Activated naive CD4-positive, alpha-beta T cell treated with anti-CD3 and anti-CD28 coated beads, Interleukin-2, amount 10 ng/mL, durations not matched to agents 7 days and 5 days (primary cell): ENCODE measurements at regions of chr14 and their contacts with region 1.

Region 1: DNA sequence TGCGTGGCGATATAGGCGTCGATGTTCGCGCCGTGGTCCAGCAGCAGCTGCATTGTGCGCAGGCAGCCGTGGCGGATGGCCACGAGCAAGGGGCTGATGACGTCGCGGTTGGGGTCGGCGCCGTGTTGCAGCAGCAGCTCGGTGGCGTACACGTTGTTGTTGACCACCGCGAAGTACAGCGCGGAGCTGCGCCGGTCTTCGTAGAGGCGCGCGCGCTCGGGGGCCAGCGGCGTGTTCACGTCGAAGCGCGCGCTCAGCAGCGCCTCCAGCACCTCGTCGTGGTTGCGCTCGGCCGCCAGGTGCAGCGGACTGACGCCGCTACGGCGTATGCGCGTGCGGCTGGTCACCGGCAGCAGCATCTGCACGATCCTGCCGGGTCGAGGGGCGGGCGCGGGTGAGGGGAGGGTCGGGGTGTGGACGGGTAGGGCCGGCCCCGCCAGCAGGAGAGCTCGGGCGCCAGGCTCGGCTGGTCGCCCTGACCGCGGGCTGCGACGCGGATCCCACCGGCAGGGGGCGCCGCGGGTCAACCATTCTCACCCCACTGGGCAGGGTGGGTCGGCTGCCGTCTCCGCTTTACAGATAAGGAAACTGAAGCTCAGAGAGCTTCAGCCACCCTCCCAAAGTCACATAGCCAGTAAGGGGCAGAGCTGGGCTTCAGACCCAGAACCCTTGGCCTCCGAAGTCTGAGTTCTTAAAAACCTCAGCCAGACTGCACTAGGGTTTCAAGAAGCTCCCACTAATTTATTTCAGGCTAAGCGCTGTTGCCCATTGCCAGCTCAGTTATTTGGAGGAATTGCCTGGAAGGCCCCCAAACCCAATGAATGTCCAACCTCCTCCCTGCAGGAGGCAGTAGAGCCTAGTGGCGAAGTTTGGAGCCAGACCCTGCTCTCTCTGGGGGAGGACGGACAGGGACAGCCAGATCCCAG is 12.4 kb downstream of the FAM181A start:
- DNase-seq: peak; percentile 92
- H3K4me3 Mint-ChIP-seq: peak overlapping the region; percentile 62
- H3K27ac Mint-ChIP-seq: peak overlapping the region; percentile 77
- H3K4me1 Mint-ChIP-seq: peaks cover 21% of the 10 kb centered on the region
- H3K27me3 Mint-ChIP-seq: peaks cover 4% of the 10 kb centered on the region

Region 2: GRCh38 chr14:93926873-93927799 is 12.4 kb before region 1 on chr14 and contains the start of gene FAM181A:
- CTCF ChIA-PET with region 1: interaction called, 10 read pairs
- DNase-seq: no peak
- H3K4me3 Mint-ChIP-seq: no peak within 1 kb of the TSS
- H3K27ac Mint-ChIP-seq: no peak within 1 kb of the TSS
- H3K4me1 Mint-ChIP-seq: no peaks in the 10 kb centered on the region
- H3K27me3 Mint-ChIP-seq: peaks cover 8% of the 10 kb centered on the region

Region 3: DNA sequence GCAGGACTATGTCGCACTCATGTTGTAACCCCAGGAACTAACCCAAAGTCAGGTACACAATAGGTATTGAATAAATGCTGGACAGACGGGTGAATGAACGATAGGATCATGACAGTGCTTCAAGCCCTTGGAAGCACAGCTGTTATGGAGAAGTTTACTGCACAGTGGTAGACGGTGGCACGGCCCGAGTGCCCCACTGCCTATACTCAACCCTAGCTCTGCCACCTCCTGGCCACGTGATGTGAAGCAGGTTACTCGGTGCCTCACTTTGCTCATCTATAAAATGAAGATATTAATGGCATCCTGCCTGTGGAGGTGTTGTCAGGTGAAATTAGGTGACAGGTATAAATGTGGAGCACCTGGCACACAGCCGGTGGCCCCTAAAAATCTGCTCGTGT is 31.0 kb after region 1 on chr14:
- CTCF ChIA-PET with region 1: interaction called, 181 read pairs
- DNase-seq: peak; percentile 78
- H3K4me3 Mint-ChIP-seq: peak overlapping the region; percentile 78
- H3K27ac Mint-ChIP-seq: peak overlapping the region; percentile 97
- H3K4me1 Mint-ChIP-seq: peaks cover 98% of the 10 kb centered on the region
- H3K27me3 Mint-ChIP-seq: no peaks in the 10 kb centered on the region

Region 4: GRCh38 chr14:93984987-93985410 is 45.4 kb after region 1 on chr14:
- CTCF ChIA-PET with region 1: interaction called, 15 read pairs
- DNase-seq: no peak
- H3K4me3 Mint-ChIP-seq: no peak overlapping the region
- H3K27ac Mint-ChIP-seq: no peak overlapping the region
- H3K4me1 Mint-ChIP-seq: peaks cover 15% of the 10 kb centered on the region
- H3K27me3 Mint-ChIP-seq: no peaks in the 10 kb centered on the region

Region 5: GRCh38 chr14:94001501-94002396 is 62.2 kb after region 1 on chr14:
- CTCF ChIA-PET with region 1: interaction called, 186 read pairs
- DNase-seq: peak; percentile 67
- H3K4me3 Mint-ChIP-seq: no peak overlapping the region
- H3K27ac Mint-ChIP-seq: peak overlapping the region; percentile 66
- H3K4me1 Mint-ChIP-seq: peaks cover 48% of the 10 kb centered on the region
- H3K27me3 Mint-ChIP-seq: peaks cover 13% of the 10 kb centered on the region

Region 6: GRCh38 chr14:94036313-94037050 is 96.9 kb after region 1 on chr14:
- CTCF ChIA-PET with region 1: interaction called, 20 read pairs
- DNase-seq: peak; percentile 88
- H3K4me3 Mint-ChIP-seq: no peak overlapping the region
- H3K27ac Mint-ChIP-seq: no peak overlapping the region
- H3K4me1 Mint-ChIP-seq: peaks cover 5% of the 10 kb centered on the region
- H3K27me3 Mint-ChIP-seq: peaks cover 10% of the 10 kb centered on the region

Region 7: DNA sequence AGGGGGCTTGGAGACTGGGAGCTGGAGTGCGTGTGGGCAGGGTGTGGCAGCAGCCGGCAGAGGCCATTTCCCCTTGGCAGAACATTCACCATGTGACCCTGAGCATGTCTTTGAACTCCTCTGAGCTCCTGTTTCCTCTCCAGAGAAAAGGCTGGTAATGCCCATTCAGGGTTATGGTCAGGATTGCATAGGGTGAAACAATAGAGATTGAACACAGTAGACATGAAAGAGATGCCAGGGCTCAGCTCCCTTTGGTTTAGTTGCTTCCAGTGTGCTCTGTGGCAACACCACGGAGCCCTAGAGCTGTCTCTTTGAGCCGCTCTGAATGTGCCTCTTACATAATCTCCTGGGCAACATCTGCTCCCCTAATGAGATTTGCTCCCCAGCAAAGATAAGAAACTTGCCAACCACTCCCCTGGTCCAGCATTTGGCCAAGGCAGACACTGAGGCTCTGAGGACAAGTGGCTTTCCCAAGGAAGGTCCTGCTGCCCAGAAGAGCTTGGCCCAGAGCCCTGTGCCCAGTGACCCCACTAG is 175.6 kb after region 1 on chr14:
- CTCF ChIA-PET with region 1: no interaction called
- DNase-seq: no peak
- H3K4me3 Mint-ChIP-seq: no peak overlapping the region
- H3K27ac Mint-ChIP-seq: no peak overlapping the region
- H3K4me1 Mint-ChIP-seq: peaks cover 15% of the 10 kb centered on the region
- H3K27me3 Mint-ChIP-seq: peaks cover 59% of the 10 kb centered on the region

Region 8: DNA sequence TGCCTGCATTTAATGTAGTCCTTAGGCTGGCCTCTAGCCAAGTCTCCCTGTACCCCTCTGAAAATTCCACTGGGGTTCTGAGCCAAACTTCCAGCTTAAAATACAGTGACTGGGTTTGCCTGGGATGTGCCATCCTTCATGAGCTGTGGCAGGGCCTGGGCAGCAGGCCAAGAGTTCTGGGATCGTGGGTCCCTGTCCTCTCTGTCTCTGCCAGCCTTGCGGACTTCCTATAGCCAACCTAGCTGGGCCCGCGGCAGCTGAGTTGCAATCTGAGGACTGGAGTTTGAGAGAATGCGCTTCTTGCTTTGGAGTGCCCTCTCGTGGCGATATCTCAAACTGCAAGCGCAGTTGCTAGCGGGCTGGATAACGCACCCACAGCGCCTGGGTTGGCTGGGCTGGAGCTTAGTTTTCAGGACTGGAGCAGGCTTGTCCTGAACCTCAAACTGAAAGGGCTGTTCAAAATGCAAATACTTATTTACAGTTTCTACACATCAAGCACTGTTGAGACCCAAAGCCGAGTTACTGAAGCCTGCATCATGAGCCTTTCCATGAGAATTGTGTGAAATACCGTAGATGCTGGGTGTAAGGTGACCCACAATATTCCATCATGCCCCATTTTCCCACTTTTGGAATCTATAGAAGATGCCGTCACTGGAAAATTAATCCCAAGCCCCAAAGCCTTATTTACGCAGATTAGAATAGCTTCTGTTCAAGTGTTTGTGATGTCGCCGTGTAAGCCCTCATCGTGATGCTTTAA is 197.2 kb after region 1 on chr14:
- CTCF ChIA-PET with region 1: interaction called, 73 read pairs
- DNase-seq: peak; percentile 91
- H3K4me3 Mint-ChIP-seq: no peak overlapping the region
- H3K27ac Mint-ChIP-seq: no peak overlapping the region
- H3K4me1 Mint-ChIP-seq: no peaks in the 10 kb centered on the region
- H3K27me3 Mint-ChIP-seq: peaks cover 43% of the 10 kb centered on the region